ENCODE measurements at regions of chr3 and their contacts with region 1.

Region 1: GRCh38 chr3:136861890-136862616 is at the start of gene NCK1:
- DNase-seq: peak; percentile 98
- ATAC-seq: peak; percentile 92
- H3K4me3 ChIP-seq: peak within 1 kb of the TSS; percentile 78 to 84 (median 83)
- H3K4me3 Mint-ChIP-seq: peak within 1 kb of the TSS; percentile 98
- H3K27ac ChIP-seq: peak within 1 kb of the TSS; percentile 85 to 90
- H3K27ac Mint-ChIP-seq: peak within 1 kb of the TSS; percentile 99
- H3K4me1 ChIP-seq: peaks cover 18 to 22% of the 10 kb centered on the region in 2 donors
- H3K4me1 Mint-ChIP-seq: peaks cover 41% of the 10 kb centered on the region
- H3K27me3 ChIP-seq: no peaks in the 10 kb centered on the region
- H3K27me3 Mint-ChIP-seq: no peaks in the 10 kb centered on the region
- CTCF ChIP-seq: peak; percentile 52
- total RNA-seq, gene NCK1: 32.4 and 39.2 TPM in 2 replicates

Region 2: GRCh38 chr3:136075218-136075808 is 786.7 kb before region 1 on chr3:
- CTCF ChIA-PET with region 1: interaction called, 4 read pairs
- POLR2A ChIA-PET with region 1: no interaction called
- intact Hi-C with region 1: loop called (anchors 1 kb)
- DNase-seq: peak; percentile 81
- ATAC-seq: peak; percentile 64
- H3K4me3 ChIP-seq: no peak overlapping the region
- H3K4me3 Mint-ChIP-seq: no peak overlapping the region
- H3K27ac ChIP-seq: no peak overlapping the region
- H3K27ac Mint-ChIP-seq: no peak overlapping the region
- H3K4me1 ChIP-seq: no peaks in the 10 kb centered on the region
- H3K4me1 Mint-ChIP-seq: no peaks in the 10 kb centered on the region
- H3K27me3 ChIP-seq: no peaks in the 10 kb centered on the region
- H3K27me3 Mint-ChIP-seq: peaks cover 4% of the 10 kb centered on the region
- CTCF ChIP-seq: peak; percentile 99

Region 3: GRCh38 chr3:136250226-136250902 is 611.7 kb before region 1 on chr3 and contains the start of gene PCCB:
- CTCF ChIA-PET with region 1: no interaction called
- POLR2A ChIA-PET with region 1: no interaction called
- intact Hi-C with region 1: loop called (anchors 1 kb)
- DNase-seq: peak; percentile 98
- ATAC-seq: peak; percentile 96
- H3K4me3 ChIP-seq: peak within 1 kb of the TSS; percentile 59 to 76 (median 73)
- H3K4me3 Mint-ChIP-seq: peak within 1 kb of the TSS; percentile 92
- H3K27ac ChIP-seq: peak within 1 kb of the TSS; percentile 72 to 83
- H3K27ac Mint-ChIP-seq: peak within 1 kb of the TSS; percentile 92
- H3K4me1 ChIP-seq: peaks cover 10 to 17% of the 10 kb centered on the region in 2 donors
- H3K4me1 Mint-ChIP-seq: peaks cover 20% of the 10 kb centered on the region
- H3K27me3 ChIP-seq: no peaks in the 10 kb centered on the region
- H3K27me3 Mint-ChIP-seq: no peaks in the 10 kb centered on the region
- CTCF ChIP-seq: peak; percentile 82
- total RNA-seq, gene PCCB: 12.5 and 15.5 TPM in 2 replicates

Region 4: GRCh38 chr3:136752422-136753325 is 109.4 kb before region 1 on chr3:
- CTCF ChIA-PET with region 1: interaction called, 55 read pairs
- POLR2A ChIA-PET with region 1: interaction called, 50 read pairs
- intact Hi-C with region 1: loop called (anchors 1 kb)
- DNase-seq: peak; percentile 100
- ATAC-seq: peak; percentile 83
- H3K4me3 ChIP-seq: peak overlapping the region; percentile 88 to 98 (median 93)
- H3K4me3 Mint-ChIP-seq: peak overlapping the region; percentile 90
- H3K27ac ChIP-seq: peak overlapping the region; percentile 99 to 100
- H3K27ac Mint-ChIP-seq: peak overlapping the region; percentile 97
- H3K4me1 ChIP-seq: peaks cover 25 to 30% of the 10 kb centered on the region in 2 donors
- H3K4me1 Mint-ChIP-seq: peaks cover 42% of the 10 kb centered on the region
- H3K27me3 ChIP-seq: no peaks in the 10 kb centered on the region
- H3K27me3 Mint-ChIP-seq: no peaks in the 10 kb centered on the region
- CTCF ChIP-seq: peak; percentile 23

Region 5: GRCh38 chr3:136899622-136900158 is 37.6 kb after region 1 on chr3:
- CTCF ChIA-PET with region 1: no interaction called
- POLR2A ChIA-PET with region 1: no interaction called
- intact Hi-C with region 1: loop called (anchors 5 kb)
- DNase-seq: no peak
- ATAC-seq: no peak
- H3K4me3 ChIP-seq: no peak overlapping the region
- H3K4me3 Mint-ChIP-seq: no peak overlapping the region
- H3K27ac ChIP-seq: peak overlapping the region in 1 of 2 donors; percentile 22
- H3K27ac Mint-ChIP-seq: peak overlapping the region; percentile 44
- H3K4me1 ChIP-seq: peaks cover 16 to 52% of the 10 kb centered on the region in 2 donors
- H3K4me1 Mint-ChIP-seq: peaks cover 62% of the 10 kb centered on the region
- H3K27me3 ChIP-seq: no peaks in the 10 kb centered on the region
- H3K27me3 Mint-ChIP-seq: no peaks in the 10 kb centered on the region
- CTCF ChIP-seq: no peak

Region 6: DNA sequence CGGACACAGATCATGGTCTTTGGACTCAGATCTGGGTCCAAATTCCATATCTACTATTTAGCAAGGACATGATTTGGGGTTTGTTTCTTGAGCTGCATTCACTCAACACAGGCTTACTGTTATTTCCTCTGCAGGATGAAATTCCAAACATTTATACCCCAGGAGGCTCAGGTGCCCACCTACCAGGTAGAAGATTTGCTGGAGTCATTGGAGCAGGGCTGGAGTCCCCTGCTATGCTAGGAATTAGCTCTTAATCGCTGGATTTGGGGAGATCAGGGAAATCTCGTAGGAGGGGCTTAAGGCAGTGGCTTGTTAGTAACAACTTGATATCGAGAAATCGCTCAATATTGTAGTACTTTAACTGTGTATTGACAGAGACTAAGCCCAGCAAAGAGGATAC is 288.8 kb after region 1 on chr3:
- CTCF ChIA-PET with region 1: no interaction called
- POLR2A ChIA-PET with region 1: no interaction called
- intact Hi-C with region 1: no loop called
- DNase-seq: no peak
- ATAC-seq: no peak
- H3K4me3 ChIP-seq: no peak overlapping the region
- H3K4me3 Mint-ChIP-seq: no peak overlapping the region
- H3K27ac ChIP-seq: no peak overlapping the region
- H3K27ac Mint-ChIP-seq: no peak overlapping the region
- H3K4me1 ChIP-seq: no peaks in the 10 kb centered on the region
- H3K4me1 Mint-ChIP-seq: no peaks in the 10 kb centered on the region
- H3K27me3 ChIP-seq: peaks cover 0 to 4% (median 0%) of the 10 kb centered on the region in 4 experiments
- H3K27me3 Mint-ChIP-seq: no peaks in the 10 kb centered on the region
- CTCF ChIP-seq: no peak

Region 7: GRCh38 chr3:138594150-138594934 is 1732.3 kb after region 1 on chr3 and contains the start of gene CEP70:
- CTCF ChIA-PET with region 1: no interaction called
- POLR2A ChIA-PET with region 1: no interaction called
- intact Hi-C with region 1: loop called (anchors 10 kb)
- DNase-seq: peak; percentile 93
- ATAC-seq: peak; percentile 92
- H3K4me3 ChIP-seq: peak within 1 kb of the TSS; percentile 69 to 93 (median 80)
- H3K4me3 Mint-ChIP-seq: peak within 1 kb of the TSS; percentile 91
- H3K27ac ChIP-seq: peak within 1 kb of the TSS; percentile 71 to 74
- H3K27ac Mint-ChIP-seq: peak within 1 kb of the TSS; percentile 85
- H3K4me1 ChIP-seq: peaks cover 5 to 10% of the 10 kb centered on the region in 2 donors
- H3K4me1 Mint-ChIP-seq: peaks cover 7% of the 10 kb centered on the region
- H3K27me3 ChIP-seq: peaks cover 0 to 3% (median 0%) of the 10 kb centered on the region in 4 experiments
- H3K27me3 Mint-ChIP-seq: no peaks in the 10 kb centered on the region
- CTCF ChIP-seq: peak; percentile 92
- total RNA-seq, gene CEP70: 9.6 and 11.6 TPM in 2 replicates